GM10248 (cell line): ENCODE measurements at regions of chr7 and their contacts with region 1.

Region 1: GRCh38 chr7:12592278-12592945 is 21.9 kb downstream of the SCIN start:
- DNase-seq: no peak
- CTCF ChIP-seq: no peak

Region 2: DNA sequence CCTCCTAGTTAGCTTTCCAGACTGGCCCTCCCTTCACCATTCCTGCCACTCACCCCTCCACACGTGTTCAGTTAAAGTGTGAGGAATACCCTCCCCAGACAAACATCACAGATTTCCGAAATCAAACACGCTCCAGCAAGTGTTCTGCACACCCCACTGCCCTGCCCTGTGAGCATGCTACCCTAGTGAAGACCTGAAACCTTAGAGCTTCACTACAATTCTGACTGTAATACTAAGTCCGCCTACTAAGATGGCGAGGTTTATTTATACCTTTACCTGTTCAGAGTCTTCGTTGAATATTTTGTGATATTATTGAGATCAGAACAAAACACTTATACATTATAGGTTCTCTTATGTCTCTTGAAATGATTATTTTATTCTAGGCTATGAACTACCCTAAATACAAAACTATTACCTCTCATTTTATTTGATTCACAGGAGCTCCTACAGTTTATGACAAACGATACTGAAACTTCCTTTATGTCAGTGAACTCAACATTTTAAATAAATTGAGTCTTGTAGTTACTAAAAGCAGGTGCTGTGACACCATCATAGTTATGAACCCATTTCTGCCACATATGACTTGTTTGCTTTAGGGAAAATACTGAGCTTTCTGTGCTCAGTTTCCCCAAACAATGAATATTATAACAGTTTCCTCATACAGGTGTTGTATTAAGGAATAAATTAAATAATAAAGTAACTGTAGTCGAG is 13.3 kb before region 1 on chr7:
- CTCF ChIA-PET with region 1: interaction called, 10 read pairs
- POLR2A ChIA-PET with region 1: no interaction called
- DNase-seq: peak; percentile 34
- CTCF ChIP-seq: no peak

Region 3: DNA sequence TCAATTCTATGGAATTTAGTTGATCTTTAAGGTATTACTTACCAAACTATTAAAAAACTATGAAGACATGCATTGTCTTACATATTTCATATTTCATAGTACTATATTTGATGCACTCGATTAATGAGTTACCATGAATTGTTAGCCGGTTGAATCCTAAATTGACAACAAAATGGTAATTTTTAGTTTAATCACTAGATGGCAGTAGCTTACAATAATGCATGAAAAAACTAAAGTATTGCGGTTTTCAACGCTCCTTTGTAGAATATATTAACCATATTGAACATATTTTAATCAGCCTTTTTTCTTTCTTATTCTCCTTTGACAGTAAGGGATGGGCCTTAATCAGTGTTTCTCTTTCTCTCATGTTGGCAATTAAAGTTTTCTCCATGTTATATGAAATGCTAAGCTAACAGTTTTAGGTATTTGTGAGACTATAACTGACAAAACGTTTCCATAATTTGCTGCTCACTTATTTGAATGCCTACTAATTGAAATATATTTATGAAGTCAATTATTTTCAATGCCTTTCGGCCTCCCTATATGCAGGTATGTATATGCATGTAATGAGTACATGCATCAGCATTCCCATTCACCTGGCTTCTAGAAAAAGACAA is 46.5 kb after region 1 on chr7:
- CTCF ChIA-PET with region 1: interaction called, 10 read pairs
- POLR2A ChIA-PET with region 1: no interaction called
- DNase-seq: peak; percentile 17
- CTCF ChIP-seq: peak; percentile 45

Region 4: DNA sequence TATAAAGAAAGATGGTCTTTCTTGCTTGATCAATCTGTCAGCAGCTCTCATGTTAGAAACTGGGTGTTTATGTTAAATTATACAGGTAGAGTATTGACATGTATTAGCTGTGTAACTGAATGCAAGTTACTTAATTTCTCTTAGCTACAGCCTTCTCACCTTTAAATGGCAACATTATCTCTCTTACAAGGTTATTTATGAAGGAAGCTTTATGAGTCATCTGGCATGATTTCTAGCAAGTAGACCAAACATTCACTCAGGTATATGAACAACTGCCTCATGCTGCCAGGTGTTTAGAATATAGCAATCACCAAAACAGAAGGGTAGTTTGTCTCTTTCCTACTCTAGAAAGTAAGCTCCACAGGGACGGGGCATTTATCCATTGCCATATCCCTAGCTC is 103.6 kb after region 1 on chr7:
- CTCF ChIA-PET with region 1: no interaction called
- POLR2A ChIA-PET with region 1: no interaction called
- DNase-seq: no peak
- CTCF ChIP-seq: no peak